ENCODE measurements at regions of chr12 and their contacts with region 1.

Region 1: GRCh38 chr12:79555028-79555930 is 135.5 kb downstream of the PAWR start:
- DNase-seq: no peak
- H3K4me3 ChIP-seq: no peak overlapping the region
- H3K27ac ChIP-seq: no peak overlapping the region
- H3K4me1 ChIP-seq: peaks cover 26% of the 10 kb centered on the region
- H3K27me3 ChIP-seq: no peaks in the 10 kb centered on the region
- CTCF ChIP-seq: peak; percentile 71

Region 2: GRCh38 chr12:79508613-79509012 is 46.7 kb before region 1 on chr12:
- intact Hi-C with region 1: no loop called
- DNase-seq: no peak
- H3K4me3 ChIP-seq: no peak overlapping the region
- H3K27ac ChIP-seq: no peak overlapping the region
- H3K4me1 ChIP-seq: no peaks in the 10 kb centered on the region
- H3K27me3 ChIP-seq: no peaks in the 10 kb centered on the region
- CTCF ChIP-seq: no peak

Region 3: GRCh38 chr12:79634957-79635471 is 79.7 kb after region 1 on chr12:
- intact Hi-C with region 1: no loop called
- DNase-seq: no peak
- H3K4me3 ChIP-seq: no peak overlapping the region
- H3K27ac ChIP-seq: no peak overlapping the region
- H3K4me1 ChIP-seq: no peaks in the 10 kb centered on the region
- H3K27me3 ChIP-seq: no peaks in the 10 kb centered on the region
- CTCF ChIP-seq: no peak

Region 4: DNA sequence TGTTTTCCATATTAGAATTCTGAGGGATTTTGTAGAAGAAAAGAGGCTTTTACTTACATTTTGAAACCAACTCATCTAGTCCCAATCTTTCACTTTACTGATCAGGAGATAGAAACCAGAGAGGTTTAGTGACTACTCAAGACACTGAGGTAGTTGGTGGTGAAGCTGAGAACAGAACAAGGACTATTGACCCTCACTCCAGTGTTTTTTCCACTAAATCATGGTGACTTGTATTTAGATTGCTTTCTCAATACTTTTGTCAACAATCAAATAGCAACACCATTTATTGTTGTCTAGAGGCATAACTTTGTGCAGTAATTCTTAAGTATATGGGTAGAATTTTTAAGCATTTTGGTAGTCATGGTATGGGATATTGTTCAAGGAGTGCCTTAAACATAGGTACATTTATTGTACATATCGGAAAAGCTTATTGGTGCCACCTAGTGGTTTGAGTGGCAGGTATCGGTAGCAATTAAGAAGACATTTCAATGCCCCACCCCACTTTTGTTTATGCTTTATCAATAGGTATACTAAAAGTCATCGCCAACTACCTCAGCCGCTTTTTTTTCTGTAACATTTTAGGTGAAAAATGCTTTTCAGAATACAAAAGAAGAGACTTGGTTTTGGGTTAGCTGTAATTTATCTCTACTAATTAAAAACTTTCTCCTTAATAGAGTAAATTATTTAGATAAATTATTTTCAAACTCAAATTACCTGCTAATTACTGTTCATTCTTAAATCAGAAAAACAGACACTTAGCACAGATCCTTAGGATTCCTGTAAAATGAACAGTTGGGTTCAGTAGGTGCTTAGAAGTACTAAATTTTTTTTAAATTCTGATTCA is 182.8 kb after region 1 on chr12:
- intact Hi-C with region 1: loop called (anchors 5 kb)
- DNase-seq: no peak
- H3K4me3 ChIP-seq: no peak overlapping the region
- H3K27ac ChIP-seq: no peak overlapping the region
- H3K4me1 ChIP-seq: no peaks in the 10 kb centered on the region
- H3K27me3 ChIP-seq: no peaks in the 10 kb centered on the region
- CTCF ChIP-seq: peak; percentile 73

Region 5: DNA sequence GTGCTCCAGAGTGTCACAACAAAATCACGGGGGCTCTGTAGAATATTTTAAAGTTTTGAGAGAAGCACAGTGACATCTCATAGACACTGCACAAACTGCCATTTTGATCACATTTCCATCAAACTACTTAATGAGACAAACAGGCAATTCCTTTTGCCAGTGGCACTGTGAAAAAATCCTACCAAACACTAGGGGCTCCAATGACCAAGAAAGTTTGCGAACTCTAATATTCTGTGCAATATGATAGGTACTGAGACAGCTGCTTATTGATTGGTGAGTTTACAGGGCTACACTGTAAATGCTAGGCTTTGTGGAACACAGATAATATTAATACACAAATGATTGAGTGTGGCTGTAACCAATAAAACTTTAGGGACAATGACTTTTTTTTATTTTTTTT is 256.1 kb after region 1 on chr12:
- intact Hi-C with region 1: no loop called
- DNase-seq: no peak
- H3K4me3 ChIP-seq: no peak overlapping the region
- H3K27ac ChIP-seq: no peak overlapping the region
- H3K4me1 ChIP-seq: peaks cover 5% of the 10 kb centered on the region
- H3K27me3 ChIP-seq: no peaks in the 10 kb centered on the region
- CTCF ChIP-seq: no peak

Region 6: DNA sequence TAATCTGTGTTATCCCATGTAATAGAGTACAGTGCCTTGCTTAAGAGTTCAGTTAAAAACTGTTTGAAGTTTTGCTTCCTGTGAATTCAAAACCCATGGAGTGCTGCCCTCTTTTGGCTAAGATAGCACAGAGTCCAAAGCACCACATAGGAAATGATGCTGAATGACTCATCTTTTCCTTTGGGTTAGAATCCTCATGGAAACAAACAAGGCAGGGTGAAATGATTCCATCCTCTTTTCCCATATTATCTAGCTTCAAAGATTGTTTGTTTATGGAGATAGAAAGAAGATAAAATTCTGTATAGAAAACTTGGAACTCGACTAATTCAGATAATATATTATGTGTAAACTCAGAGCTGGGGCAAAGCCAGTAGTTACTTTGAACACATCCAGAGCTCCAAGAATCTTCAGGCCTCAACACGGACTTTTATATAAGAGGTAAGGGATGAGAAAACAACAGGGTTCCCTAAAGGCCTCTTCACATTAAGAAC is 631.5 kb after region 1 on chr12:
- intact Hi-C with region 1: loop called (anchors 10 kb)
- DNase-seq: no peak
- H3K4me3 ChIP-seq: peak overlapping the region; percentile 9
- H3K27ac ChIP-seq: peak overlapping the region; percentile 91
- H3K4me1 ChIP-seq: peaks cover 38% of the 10 kb centered on the region
- H3K27me3 ChIP-seq: no peaks in the 10 kb centered on the region
- CTCF ChIP-seq: peak; percentile 86

Region 7: DNA sequence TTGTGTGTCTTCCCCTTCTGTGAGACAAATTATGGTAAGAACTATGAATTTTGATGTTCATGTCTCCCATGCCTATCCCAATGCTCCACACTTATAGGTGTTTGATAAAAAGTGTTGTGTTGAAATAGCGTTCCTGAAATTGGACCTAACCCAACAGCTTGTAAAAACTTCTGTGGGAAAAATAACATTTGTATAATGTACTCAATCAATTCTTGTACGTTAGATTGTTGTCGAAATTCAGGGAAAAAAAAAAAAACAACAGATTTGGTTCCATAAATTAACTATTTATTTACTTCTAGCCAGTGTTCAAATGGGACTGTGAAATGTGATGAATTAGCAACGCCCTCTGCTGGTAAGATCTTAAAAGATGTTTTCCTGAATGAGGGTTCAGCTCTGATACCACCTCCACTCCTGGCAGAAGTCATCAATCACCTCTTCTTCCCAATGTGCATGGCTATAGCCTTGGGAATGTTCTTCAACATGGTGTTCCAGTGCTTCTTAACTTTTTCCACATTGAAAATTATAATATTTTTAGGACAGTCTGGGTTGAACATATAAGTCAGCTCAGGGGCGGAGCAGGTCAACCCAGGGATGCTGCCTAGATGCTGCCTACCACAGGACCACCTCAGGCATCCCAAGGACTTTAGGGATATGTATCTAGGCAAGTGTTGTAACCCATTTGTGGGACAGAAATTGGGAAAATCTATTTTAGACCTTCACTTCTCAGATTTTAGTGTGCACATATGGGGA is 714.7 kb after region 1 on chr12:
- intact Hi-C with region 1: loop called (anchors 10 kb)
- DNase-seq: no peak
- H3K4me3 ChIP-seq: no peak overlapping the region
- H3K27ac ChIP-seq: no peak overlapping the region
- H3K4me1 ChIP-seq: peaks cover 7% of the 10 kb centered on the region
- H3K27me3 ChIP-seq: no peaks in the 10 kb centered on the region
- CTCF ChIP-seq: peak; percentile 77

Measured in left ventricle myocardium inferior (tissue), 1 donor.